GM12878 (cell line): ENCODE measurements at regions of chrX and their contacts with region 1.

Region 1: GRCh38 chrX:13254076-13254785 is 65.6 kb downstream of the ATXN3L start:
- DNase-seq: peak; percentile 56
- ATAC-seq: peak; percentile 59
- H3K4me3 ChIP-seq: no peak overlapping the region; the same call in 1 of the 2 replicates
- H3K27ac ChIP-seq: peak overlapping the region; percentile 92
- H3K4me1 ChIP-seq: peaks cover 58% of the 10 kb centered on the region
- H3K27me3 ChIP-seq: no peaks in the 10 kb centered on the region
- CTCF ChIP-seq: peak; percentile 33 to 52 (median 41); a peak in 4 of 6 replicates
- EP300 ChIP-seq: no peak
- POLR2A ChIP-seq: no peak
- RAD21 ChIP-seq: peak; percentile 75

Region 2: GRCh38 chrX:12955882-12956703 is 298.1 kb before region 1 on chrX:
- CTCF ChIA-PET with region 1: interaction called, 7 read pairs
- POLR2A ChIA-PET with region 1: no interaction called
- RAD21 ChIA-PET with region 1: interaction called, 137 read pairs
- SMC1A ChIA-PET with region 1: interaction called, 121 read pairs
- in situ Hi-C with region 1: loop called (anchors 5 kb)
- intact Hi-C with region 1: loop called (anchors 2 kb)
- DNase-seq: peak; percentile 77
- ATAC-seq: peak; percentile 59
- H3K4me3 ChIP-seq: peak overlapping the region; percentile 32
- H3K27ac ChIP-seq: peak overlapping the region; percentile 99
- H3K4me1 ChIP-seq: peaks cover 42% of the 10 kb centered on the region
- H3K27me3 ChIP-seq: no peaks in the 10 kb centered on the region
- CTCF ChIP-seq: no peak
- EP300 ChIP-seq: peak; percentile 48 to 62; a peak in 2 of 4 replicates
- POLR2A ChIP-seq: peak; percentile 30
- RAD21 ChIP-seq: no peak

Region 3: DNA sequence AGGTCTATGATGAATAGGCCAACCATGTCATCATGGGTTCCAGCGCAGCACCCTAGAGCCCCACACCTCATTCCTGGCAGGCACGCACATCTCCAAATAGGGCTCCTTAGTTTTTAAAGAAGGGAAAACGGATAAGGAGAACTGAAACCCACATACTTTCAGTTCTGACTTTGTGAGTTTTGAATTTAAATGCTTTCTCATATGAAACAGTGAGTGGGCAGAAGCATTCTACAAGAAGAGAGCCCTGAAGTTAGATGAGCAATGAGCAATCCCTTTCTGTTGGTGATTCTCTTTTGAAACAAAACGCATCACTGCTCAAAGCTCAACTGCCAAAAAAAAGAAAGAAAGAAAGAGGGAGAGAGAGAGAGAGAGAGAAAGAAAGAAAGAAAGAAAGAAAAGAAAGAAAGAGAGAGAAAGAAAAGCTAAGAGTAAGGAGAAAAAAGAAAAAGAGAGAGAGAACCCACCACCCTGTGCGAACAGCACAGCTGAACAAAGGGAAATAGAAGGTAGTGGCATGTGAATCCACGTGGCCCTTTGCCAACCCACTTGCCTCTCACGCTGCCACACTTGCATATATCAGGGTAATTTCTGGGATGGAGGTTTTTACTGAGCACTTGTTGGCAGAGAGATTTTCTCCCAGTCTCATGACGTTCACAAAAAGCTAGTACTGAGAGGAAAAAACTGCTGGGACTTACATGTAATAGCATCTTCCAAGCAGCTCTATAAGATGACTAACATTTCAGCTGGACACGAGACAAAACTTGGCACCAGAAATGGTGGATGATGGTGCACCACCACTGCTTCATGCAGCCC is 248.4 kb before region 1 on chrX:
- CTCF ChIA-PET with region 1: interaction called, 3 read pairs
- POLR2A ChIA-PET with region 1: no interaction called
- RAD21 ChIA-PET with region 1: interaction called, 35 read pairs
- SMC1A ChIA-PET with region 1: interaction called, 7 read pairs
- in situ Hi-C with region 1: no loop called
- intact Hi-C with region 1: loop called (anchors 2 kb)
- DNase-seq: peak; percentile 89
- ATAC-seq: peak; percentile 55
- H3K4me3 ChIP-seq: peak overlapping the region; percentile 28; the same call in 1 of the 2 replicates
- H3K27ac ChIP-seq: peak overlapping the region; percentile 91
- H3K4me1 ChIP-seq: peaks cover 83% of the 10 kb centered on the region
- H3K27me3 ChIP-seq: no peaks in the 10 kb centered on the region
- CTCF ChIP-seq: no peak
- EP300 ChIP-seq: peak; percentile 96
- POLR2A ChIP-seq: no peak
- RAD21 ChIP-seq: no peak; the same call in 1 of the 2 replicates

Region 4: GRCh38 chrX:13239272-13239671 is 15.0 kb before region 1 on chrX:
- CTCF ChIA-PET with region 1: no interaction called
- POLR2A ChIA-PET with region 1: interaction called, 5 read pairs
- RAD21 ChIA-PET with region 1: interaction called, 10 read pairs
- SMC1A ChIA-PET with region 1: interaction called, 10 read pairs
- in situ Hi-C with region 1: no loop called
- intact Hi-C with region 1: no loop called
- DNase-seq: no peak
- ATAC-seq: no peak
- H3K4me3 ChIP-seq: no peak overlapping the region
- H3K27ac ChIP-seq: no peak overlapping the region
- H3K4me1 ChIP-seq: no peaks in the 10 kb centered on the region
- H3K27me3 ChIP-seq: no peaks in the 10 kb centered on the region
- CTCF ChIP-seq: no peak
- EP300 ChIP-seq: no peak
- POLR2A ChIP-seq: no peak
- RAD21 ChIP-seq: no peak

Region 5: GRCh38 chrX:13376857-13377549 is 122.8 kb after region 1 on chrX:
- CTCF ChIA-PET with region 1: no interaction called
- POLR2A ChIA-PET with region 1: no interaction called
- RAD21 ChIA-PET with region 1: no interaction called
- SMC1A ChIA-PET with region 1: interaction called, 4 read pairs
- in situ Hi-C with region 1: no loop called
- intact Hi-C with region 1: loop called (anchors 5 kb)
- DNase-seq: no peak
- ATAC-seq: peak; percentile 63
- H3K4me3 ChIP-seq: no peak overlapping the region
- H3K27ac ChIP-seq: no peak overlapping the region
- H3K4me1 ChIP-seq: no peaks in the 10 kb centered on the region; the same call in 1 of the 2 replicates
- H3K27me3 ChIP-seq: no peaks in the 10 kb centered on the region
- CTCF ChIP-seq: no peak
- EP300 ChIP-seq: no peak
- POLR2A ChIP-seq: no peak
- RAD21 ChIP-seq: no peak